Aorta (tissue), 5 donors: ENCODE measurements at regions of chr19 and their contacts with region 1.

Region 1: DNA sequence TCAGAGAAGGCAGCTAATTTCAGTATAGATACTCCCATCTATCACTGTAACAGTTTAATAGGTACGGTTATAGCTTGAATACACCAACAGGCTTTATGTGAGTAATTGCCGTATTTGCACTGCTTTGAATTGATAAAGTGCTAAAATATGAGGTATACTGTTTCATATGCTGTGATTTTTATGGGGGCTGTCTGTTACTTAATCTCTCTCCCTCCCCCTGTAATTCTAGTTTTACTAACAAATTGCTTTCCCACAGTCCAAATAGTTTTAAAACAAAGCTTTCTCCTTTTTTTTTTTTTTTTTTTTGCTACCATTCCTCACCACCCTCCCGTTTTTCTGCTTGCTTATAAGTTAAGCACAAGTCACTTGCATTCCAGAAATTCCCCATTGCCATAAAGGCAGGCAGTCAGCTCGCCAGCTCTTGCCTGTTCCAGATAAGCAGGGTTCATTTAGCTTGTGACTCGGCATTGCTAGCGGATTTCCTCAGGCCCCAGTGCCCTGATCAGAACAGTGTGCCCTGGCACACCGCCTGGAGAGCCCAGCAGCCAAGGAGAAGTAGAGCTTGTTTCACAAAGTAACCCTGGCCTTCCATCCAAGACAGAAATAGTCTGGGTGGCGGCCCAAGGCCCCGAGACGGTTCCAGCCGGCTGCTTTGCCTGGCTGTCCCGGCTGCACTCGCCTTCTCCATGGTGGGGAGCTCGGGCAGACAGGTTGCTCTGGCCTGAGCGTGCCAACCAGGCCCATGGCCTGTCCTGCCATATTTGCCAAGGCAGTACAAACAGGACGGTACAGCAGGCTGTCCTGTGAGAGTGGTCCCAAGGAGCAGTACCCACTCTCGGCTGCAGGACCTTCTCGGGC is 43.5 kb upstream of the NPAS1 start:
- DNase-seq: peak; percentile 98 to 99
- ATAC-seq: peak; percentile 93
- H3K4me3 ChIP-seq: no peak overlapping the region
- H3K27ac ChIP-seq: peak overlapping the region; percentile 64 to 90
- H3K4me1 ChIP-seq: peaks cover 9 to 14% of the 10 kb centered on the region in 2 donors
- H3K27me3 ChIP-seq: no peaks in the 10 kb centered on the region

Region 2: GRCh38 chr19:46924874-46925547 is 51.1 kb before region 1 on chr19:
- intact Hi-C with region 1: loop called in 1 of 2 experiments (anchors 5 kb)
- DNase-seq: no peak
- ATAC-seq: peak; percentile 54
- H3K4me3 ChIP-seq: no peak overlapping the region
- H3K27ac ChIP-seq: peak overlapping the region in 1 of 2 donors; percentile 98
- H3K4me1 ChIP-seq: peaks cover 6 to 25% of the 10 kb centered on the region in 2 donors
- H3K27me3 ChIP-seq: no peaks in the 10 kb centered on the region

Region 3: GRCh38 chr19:46944918-46945628 is 31.1 kb before region 1 on chr19:
- intact Hi-C with region 1: loop called in 1 of 2 experiments (anchors 5 kb)
- DNase-seq: peak; percentile 83 to 89
- ATAC-seq: peak; percentile 83
- H3K4me3 ChIP-seq: no peak overlapping the region
- H3K27ac ChIP-seq: peak overlapping the region; percentile 81 to 90
- H3K4me1 ChIP-seq: peaks cover 8 to 9% of the 10 kb centered on the region in 2 donors
- H3K27me3 ChIP-seq: no peaks in the 10 kb centered on the region